ENCODE measurements at regions of chr20 and their contacts with region 1.

Region 1: GRCh38 chr20:2914160-2914559 is 40.9 kb downstream of the PTPRA start:
- DNase-seq: no peak
- H3K4me3 Mint-ChIP-seq: no peak overlapping the region
- H3K27ac Mint-ChIP-seq: no peak overlapping the region
- H3K4me1 Mint-ChIP-seq: peaks cover 18% of the 10 kb centered on the region
- H3K27me3 Mint-ChIP-seq: no peaks in the 10 kb centered on the region

Region 2: GRCh38 chr20:2899243-2899642 is 14.9 kb before region 1 on chr20:
- CTCF ChIA-PET with region 1: no interaction called
- intact Hi-C with region 1: loop called (anchors 1 kb)
- DNase-seq: peak; percentile 75
- H3K4me3 Mint-ChIP-seq: no peak overlapping the region
- H3K27ac Mint-ChIP-seq: no peak overlapping the region
- H3K4me1 Mint-ChIP-seq: peaks cover 41% of the 10 kb centered on the region
- H3K27me3 Mint-ChIP-seq: no peaks in the 10 kb centered on the region

Region 3: DNA sequence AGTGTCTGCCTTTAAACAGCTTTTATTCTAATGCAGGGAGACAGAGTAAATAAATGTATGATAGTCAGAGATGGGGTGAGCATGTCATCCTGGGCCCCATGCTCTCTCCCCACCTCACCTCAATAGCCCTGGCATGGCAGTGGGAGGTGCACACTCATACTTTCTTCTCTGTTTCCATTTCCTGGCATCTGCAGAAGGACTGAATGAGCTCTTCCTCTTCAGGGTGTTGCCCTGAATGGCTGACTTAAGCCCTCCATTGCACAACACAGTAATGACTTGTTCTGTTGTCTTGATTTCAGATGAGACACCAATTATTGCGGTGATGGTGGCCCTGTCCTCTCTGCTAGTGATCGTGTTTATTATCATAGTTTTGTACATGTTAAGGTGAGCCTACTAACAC is 72.3 kb after region 1 on chr20:
- CTCF ChIA-PET with region 1: no interaction called
- intact Hi-C with region 1: loop called (anchors 1 kb)
- DNase-seq: peak; percentile 84
- H3K4me3 Mint-ChIP-seq: peak overlapping the region; percentile 2
- H3K27ac Mint-ChIP-seq: peak overlapping the region; percentile 89
- H3K4me1 Mint-ChIP-seq: peaks cover 2% of the 10 kb centered on the region
- H3K27me3 Mint-ChIP-seq: no peaks in the 10 kb centered on the region

Region 4: GRCh38 chr20:3000852-3001523 is 86.8 kb after region 1 on chr20:
- CTCF ChIA-PET with region 1: interaction called, 5 read pairs
- intact Hi-C with region 1: loop called (anchors 1 kb)
- DNase-seq: peak; percentile 18
- H3K4me3 Mint-ChIP-seq: no peak overlapping the region
- H3K27ac Mint-ChIP-seq: no peak overlapping the region
- H3K4me1 Mint-ChIP-seq: no peaks in the 10 kb centered on the region
- H3K27me3 Mint-ChIP-seq: no peaks in the 10 kb centered on the region

Region 5: GRCh38 chr20:3010985-3011723 is 97.0 kb after region 1 on chr20:
- CTCF ChIA-PET with region 1: no interaction called
- intact Hi-C with region 1: loop called (anchors 1 kb)
- DNase-seq: peak; percentile 50
- H3K4me3 Mint-ChIP-seq: no peak overlapping the region
- H3K27ac Mint-ChIP-seq: peak overlapping the region; percentile 73
- H3K4me1 Mint-ChIP-seq: peaks cover 35% of the 10 kb centered on the region
- H3K27me3 Mint-ChIP-seq: no peaks in the 10 kb centered on the region